Endothelial cell of umbilical vein (primary cell): ENCODE measurements at regions of chr21 and their contacts with region 1.

Region 1: DNA sequence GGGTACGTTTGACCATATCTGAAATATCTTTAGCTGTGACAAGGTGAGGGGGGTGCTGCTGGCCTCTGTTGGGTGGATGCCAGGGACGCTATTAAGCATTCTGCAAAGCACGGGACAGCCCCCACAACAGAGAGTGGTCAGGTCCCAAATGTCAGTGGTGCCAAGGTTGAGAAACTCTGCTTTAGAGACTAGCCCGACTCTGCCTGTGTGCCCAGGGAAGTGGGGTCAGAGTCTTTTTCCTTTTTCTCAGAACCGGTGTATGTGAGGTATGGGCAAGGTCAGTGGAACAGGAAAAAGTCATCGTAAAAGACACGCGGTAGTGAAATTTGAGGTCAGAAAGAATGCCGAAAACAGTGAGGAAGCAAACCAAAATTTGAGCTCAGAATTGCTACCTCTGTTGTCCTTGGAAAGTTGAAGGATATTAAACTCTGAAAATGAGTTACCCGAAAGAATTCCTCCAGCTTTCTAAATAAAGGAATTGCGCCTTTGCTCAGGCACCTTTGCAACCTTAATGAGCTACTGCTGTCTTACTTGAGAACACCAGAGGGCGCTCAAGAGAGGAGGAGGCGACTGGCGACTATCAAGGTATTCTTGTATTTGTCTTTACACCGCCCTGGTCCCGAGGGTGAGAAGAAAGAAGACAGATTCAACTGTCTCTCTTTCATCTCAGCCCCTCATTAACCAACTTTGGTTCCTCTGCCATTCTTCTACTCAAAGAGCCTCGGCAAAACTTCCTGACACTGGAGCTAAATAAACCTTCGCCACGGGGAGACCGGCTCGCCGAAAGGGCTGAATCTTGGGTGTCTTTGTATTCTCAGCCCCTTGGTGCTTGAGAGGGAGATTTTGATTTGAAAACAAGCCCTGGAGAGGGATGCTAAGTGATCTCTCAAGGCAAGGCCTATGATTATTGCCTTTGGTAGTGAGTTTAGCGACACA is 85.4 kb upstream of the OLIG2 start:
- DNase-seq: peak; percentile 40
- H3K4me3 ChIP-seq: no peak overlapping the region
- H3K27ac ChIP-seq: no peak overlapping the region
- H3K4me1 ChIP-seq: no peaks in the 10 kb centered on the region
- H3K27me3 ChIP-seq: peaks cover 4 to 5% of the 10 kb centered on the region in 2 experiments
- CTCF ChIP-seq: peak; percentile 69 to 75
- POLR2A ChIP-seq: no peak

Region 2: DNA sequence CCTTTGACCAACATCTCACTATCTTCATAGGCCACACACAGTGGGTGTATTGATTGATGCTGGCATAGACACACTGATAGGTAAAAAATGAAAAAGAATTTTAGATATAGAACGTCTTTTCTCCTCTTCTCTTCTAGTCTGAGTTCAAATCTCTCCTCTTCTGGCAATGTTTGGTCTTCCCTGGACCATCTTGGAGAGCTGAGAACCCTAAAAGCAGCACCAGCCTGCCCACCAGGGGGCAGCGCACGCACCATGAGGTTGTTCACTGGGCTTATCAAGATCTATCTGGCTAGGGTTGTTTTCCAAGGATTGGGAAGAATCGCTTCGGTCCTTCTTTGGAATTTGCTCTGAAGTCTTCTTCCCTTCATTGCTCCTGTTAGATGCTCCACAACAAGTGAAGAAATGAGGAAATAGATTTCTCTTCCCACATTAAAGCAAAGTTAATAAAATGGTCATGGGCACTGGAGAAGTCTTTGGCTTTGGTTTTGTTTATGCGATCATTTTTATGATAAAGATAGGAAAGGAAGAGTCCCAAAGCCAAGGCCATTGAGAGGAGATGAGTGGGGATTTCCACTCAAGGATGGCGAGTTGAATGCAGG is 18.6 kb before region 1 on chr21:
- CTCF ChIA-PET with region 1: interaction called, 21 read pairs
- POLR2A ChIA-PET with region 1: no interaction called
- dilution Hi-C with region 1: no loop called
- intact Hi-C with region 1: no loop called
- DNase-seq: peak; percentile 6
- H3K4me3 ChIP-seq: no peak overlapping the region
- H3K27ac ChIP-seq: no peak overlapping the region
- H3K4me1 ChIP-seq: no peaks in the 10 kb centered on the region
- H3K27me3 ChIP-seq: peaks cover 4 to 7% of the 10 kb centered on the region in 2 experiments
- CTCF ChIP-seq: peak; percentile 61 to 65
- POLR2A ChIP-seq: no peak

Region 3: GRCh38 chr21:32958288-32959002 is 18.1 kb after region 1 on chr21:
- CTCF ChIA-PET with region 1: interaction called, 22 read pairs
- POLR2A ChIA-PET with region 1: no interaction called
- dilution Hi-C with region 1: no loop called
- intact Hi-C with region 1: no loop called
- DNase-seq: no peak
- H3K4me3 ChIP-seq: no peak overlapping the region
- H3K27ac ChIP-seq: no peak overlapping the region
- H3K4me1 ChIP-seq: no peaks in the 10 kb centered on the region
- H3K27me3 ChIP-seq: peaks cover 34 to 35% of the 10 kb centered on the region in 2 experiments
- CTCF ChIP-seq: no peak
- POLR2A ChIP-seq: no peak

Region 4: GRCh38 chr21:32974653-32975052 is 34.3 kb after region 1 on chr21:
- CTCF ChIA-PET with region 1: interaction called, 12 read pairs
- POLR2A ChIA-PET with region 1: no interaction called
- dilution Hi-C with region 1: no loop called
- intact Hi-C with region 1: no loop called
- DNase-seq: no peak
- H3K4me3 ChIP-seq: no peak overlapping the region
- H3K27ac ChIP-seq: no peak overlapping the region
- H3K4me1 ChIP-seq: no peaks in the 10 kb centered on the region
- H3K27me3 ChIP-seq: peaks cover 0 to 6% of the 10 kb centered on the region in 2 experiments
- CTCF ChIP-seq: no peak
- POLR2A ChIP-seq: no peak

Region 5: GRCh38 chr21:33007747-33008146 is 67.4 kb after region 1 on chr21:
- CTCF ChIA-PET with region 1: interaction called, 10 read pairs
- POLR2A ChIA-PET with region 1: no interaction called
- dilution Hi-C with region 1: no loop called
- intact Hi-C with region 1: no loop called
- DNase-seq: no peak
- H3K4me3 ChIP-seq: no peak overlapping the region
- H3K27ac ChIP-seq: no peak overlapping the region
- H3K4me1 ChIP-seq: no peaks in the 10 kb centered on the region
- H3K27me3 ChIP-seq: peaks cover 17 to 19% of the 10 kb centered on the region in 2 experiments
- CTCF ChIP-seq: no peak
- POLR2A ChIP-seq: no peak

Region 6: DNA sequence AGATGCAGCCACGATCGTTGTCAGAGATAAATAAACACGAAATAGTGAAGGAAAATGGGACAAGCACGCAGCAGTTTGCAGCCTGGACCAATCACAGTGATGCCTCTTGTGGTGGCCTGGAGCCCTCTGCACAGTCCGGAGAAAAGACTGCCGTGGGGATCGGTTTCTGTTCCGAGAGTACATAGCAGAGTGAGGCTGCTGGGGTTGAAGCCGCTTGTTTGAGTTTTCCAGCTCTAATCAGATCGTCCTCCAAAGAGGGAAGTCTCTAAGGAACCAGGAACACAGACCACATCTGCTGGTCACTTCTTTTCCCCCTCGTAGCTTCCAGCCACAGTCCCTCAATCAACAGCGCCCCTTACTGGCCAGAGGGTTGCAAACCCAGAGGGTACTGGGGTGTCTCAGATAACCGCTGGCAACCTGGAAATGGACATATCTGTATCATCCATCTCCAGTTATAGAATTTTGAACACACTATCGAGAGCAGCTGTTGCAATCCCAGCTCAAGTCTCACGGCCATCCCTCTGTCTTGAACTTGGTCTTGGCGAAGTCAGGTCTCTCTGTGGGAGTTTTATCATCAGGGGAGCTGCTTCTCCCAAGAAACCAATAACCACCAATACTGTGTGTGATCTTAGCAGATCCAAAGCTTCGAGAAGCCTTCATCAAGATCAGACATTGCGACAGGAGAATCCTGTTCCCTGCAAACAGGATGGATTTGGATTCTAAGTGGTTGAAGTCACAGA is 187.0 kb after region 1 on chr21:
- CTCF ChIA-PET with region 1: interaction called, 193 read pairs
- POLR2A ChIA-PET with region 1: no interaction called
- dilution Hi-C with region 1: no loop called
- intact Hi-C with region 1: loop called (anchors 1 kb)
- DNase-seq: peak; percentile 70
- H3K4me3 ChIP-seq: no peak overlapping the region
- H3K27ac ChIP-seq: no peak overlapping the region
- H3K4me1 ChIP-seq: no peaks in the 10 kb centered on the region
- H3K27me3 ChIP-seq: peaks cover 10 to 18% of the 10 kb centered on the region in 2 experiments
- CTCF ChIP-seq: peak; percentile 88
- POLR2A ChIP-seq: no peak